CD4-positive, alpha-beta T cell (primary cell): ENCODE measurements at regions of chr20 and their contacts with region 1.

Region 1: GRCh38 chr20:36154700-36155628 is at the start of gene EPB41L1:
- DNase-seq: no peak
- ATAC-seq: peak; percentile 45
- H3K4me3 ChIP-seq: peak within 1 kb of the TSS; percentile 43
- H3K4me3 Mint-ChIP-seq: peak within 1 kb of the TSS; percentile 78
- H3K27ac ChIP-seq: no peak within 1 kb of the TSS
- H3K27ac Mint-ChIP-seq: no peak within 1 kb of the TSS
- H3K4me1 ChIP-seq: peaks cover 15% of the 10 kb centered on the region
- H3K4me1 Mint-ChIP-seq: peaks cover 6% of the 10 kb centered on the region
- H3K27me3 ChIP-seq: peaks cover 31% of the 10 kb centered on the region in 2 experiments
- H3K27me3 Mint-ChIP-seq: peaks cover 53% of the 10 kb centered on the region
- CTCF ChIP-seq: no peak
- total RNA-seq, gene EPB41L1: 0.19 to 0.25 TPM

Region 2: GRCh38 chr20:35664544-35665221 is 490.3 kb before region 1 on chr20 and contains the starts of genes CPNE1 and RBM12:
- CTCF ChIA-PET with region 1: no interaction called
- POLR2A ChIA-PET with region 1: no interaction called
- intact Hi-C with region 1: no loop called
- DNase-seq: peak; percentile 87 to 97 (median 92)
- ATAC-seq: peak; percentile 67
- H3K4me3 ChIP-seq: peak within 1 kb of the TSS; percentile 97
- H3K4me3 Mint-ChIP-seq: peak within 1 kb of the TSS; percentile 89
- H3K27ac ChIP-seq: peak within 1 kb of the TSS; percentile 99
- H3K27ac Mint-ChIP-seq: peak within 1 kb of the TSS; percentile 99
- H3K4me1 ChIP-seq: peaks cover 37% of the 10 kb centered on the region
- H3K4me1 Mint-ChIP-seq: peaks cover 49% of the 10 kb centered on the region
- H3K27me3 ChIP-seq: no peaks in the 10 kb centered on the region
- H3K27me3 Mint-ChIP-seq: no peaks in the 10 kb centered on the region
- CTCF ChIP-seq: no peak
- total RNA-seq, gene CPNE1: 146 to 153 TPM
- total RNA-seq, gene RBM12: 91.7 to 95.2 TPM

Region 3: DNA sequence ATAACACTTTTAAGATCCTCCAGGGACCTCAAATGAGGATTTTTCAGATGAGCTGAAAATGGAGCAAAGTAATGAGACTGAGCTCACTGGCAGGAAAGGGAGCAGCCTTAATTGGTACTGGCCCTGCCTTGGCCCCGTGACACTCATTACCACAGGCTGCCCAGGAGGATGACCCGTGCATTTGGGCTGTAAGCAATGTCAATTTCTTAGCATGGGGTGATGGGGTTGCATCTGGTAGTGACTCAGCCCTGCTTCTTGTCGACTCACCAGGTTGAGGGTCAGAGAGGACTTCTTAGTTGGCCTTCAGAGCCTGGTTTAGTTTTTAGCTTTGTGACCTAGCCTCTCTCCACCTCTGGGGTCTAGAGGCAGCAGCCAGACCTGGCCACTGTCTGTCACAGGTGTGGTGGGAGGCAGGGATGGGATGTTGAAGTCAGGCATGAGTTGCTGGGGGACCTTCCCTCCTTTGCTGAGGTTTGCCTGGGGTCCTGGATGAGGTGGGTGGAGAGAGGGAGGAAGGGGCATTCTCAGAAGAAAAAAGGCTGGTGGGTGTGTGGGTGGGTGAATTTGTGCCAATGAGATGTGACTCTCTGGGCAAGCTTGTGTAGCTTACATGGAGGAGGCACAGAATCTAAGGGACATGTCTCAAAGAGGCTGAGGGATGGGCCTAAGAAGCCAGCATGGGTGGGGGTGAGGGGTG is 26.4 kb before region 1 on chr20:
- CTCF ChIA-PET with region 1: no interaction called
- POLR2A ChIA-PET with region 1: no interaction called
- intact Hi-C with region 1: no loop called
- DNase-seq: no peak
- ATAC-seq: no peak
- H3K4me3 ChIP-seq: no peak overlapping the region
- H3K4me3 Mint-ChIP-seq: no peak overlapping the region
- H3K27ac ChIP-seq: no peak overlapping the region
- H3K27ac Mint-ChIP-seq: no peak overlapping the region
- H3K4me1 ChIP-seq: no peaks in the 10 kb centered on the region
- H3K4me1 Mint-ChIP-seq: no peaks in the 10 kb centered on the region
- H3K27me3 ChIP-seq: no peaks in the 10 kb centered on the region
- H3K27me3 Mint-ChIP-seq: peaks cover 9% of the 10 kb centered on the region
- CTCF ChIP-seq: no peak

Region 4: GRCh38 chr20:36439040-36439730 is 284.2 kb after region 1 on chr20:
- CTCF ChIA-PET with region 1: interaction called, 4 read pairs
- POLR2A ChIA-PET with region 1: no interaction called
- intact Hi-C with region 1: loop called in 1 of 2 experiments (anchors 5 kb)
- DNase-seq: peak; percentile 44 to 76 (median 55)
- ATAC-seq: peak; percentile 28
- H3K4me3 ChIP-seq: no peak overlapping the region
- H3K4me3 Mint-ChIP-seq: no peak overlapping the region
- H3K27ac ChIP-seq: no peak overlapping the region
- H3K27ac Mint-ChIP-seq: no peak overlapping the region
- H3K4me1 ChIP-seq: peaks cover 21% of the 10 kb centered on the region
- H3K4me1 Mint-ChIP-seq: peaks cover 4% of the 10 kb centered on the region
- H3K27me3 ChIP-seq: no peaks in the 10 kb centered on the region
- H3K27me3 Mint-ChIP-seq: peaks cover 13% of the 10 kb centered on the region
- CTCF ChIP-seq: peak; percentile 83